Right cardiac atrium (tissue), 5 donors: ENCODE measurements at regions of chr18 and their contacts with region 1.

Region 1: DNA sequence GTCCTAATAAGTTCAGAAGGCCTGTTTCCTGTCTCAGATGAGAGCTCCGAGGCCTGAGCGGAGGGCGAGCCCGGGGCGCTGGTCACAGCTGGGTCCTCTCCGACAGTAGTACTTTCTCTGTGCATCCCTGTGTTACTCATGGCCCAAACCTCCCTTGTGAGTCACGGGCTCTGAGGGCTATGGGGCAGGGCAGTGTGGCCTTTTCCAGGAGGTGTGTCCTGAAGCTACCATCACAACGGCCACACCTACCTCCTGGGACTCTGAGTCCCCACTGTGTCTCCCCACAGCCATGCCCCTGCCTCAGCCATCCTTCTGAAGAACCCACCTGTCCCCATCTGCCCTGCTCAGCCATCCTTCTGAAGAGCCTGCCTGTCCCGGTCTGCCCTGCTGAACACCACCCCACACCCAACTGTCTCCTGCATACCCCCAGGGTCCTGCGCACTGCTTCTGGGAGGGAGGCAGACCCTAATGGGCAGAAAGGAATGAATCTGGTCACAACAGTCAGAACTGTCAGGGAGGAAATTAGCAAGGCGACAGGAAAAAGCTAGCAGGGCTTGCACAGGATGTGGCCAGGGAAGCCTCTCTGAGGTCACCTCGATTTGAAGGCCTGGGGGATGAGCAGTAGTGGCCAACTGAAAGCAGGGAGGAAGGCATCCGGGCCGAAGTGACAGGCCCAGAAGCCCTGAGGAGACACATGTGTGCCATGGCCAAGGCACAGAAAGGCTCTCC is 145.4 kb upstream of the RIOK3 start:
- DNase-seq: no peak
- ATAC-seq: peak in 1 of 2 donors; percentile 7
- H3K4me3 ChIP-seq: no peak overlapping the region
- H3K27ac ChIP-seq: no peak overlapping the region
- H3K4me1 ChIP-seq: peaks cover 3% of the 10 kb centered on the region
- H3K27me3 ChIP-seq: no peaks in the 10 kb centered on the region

Region 2: DNA sequence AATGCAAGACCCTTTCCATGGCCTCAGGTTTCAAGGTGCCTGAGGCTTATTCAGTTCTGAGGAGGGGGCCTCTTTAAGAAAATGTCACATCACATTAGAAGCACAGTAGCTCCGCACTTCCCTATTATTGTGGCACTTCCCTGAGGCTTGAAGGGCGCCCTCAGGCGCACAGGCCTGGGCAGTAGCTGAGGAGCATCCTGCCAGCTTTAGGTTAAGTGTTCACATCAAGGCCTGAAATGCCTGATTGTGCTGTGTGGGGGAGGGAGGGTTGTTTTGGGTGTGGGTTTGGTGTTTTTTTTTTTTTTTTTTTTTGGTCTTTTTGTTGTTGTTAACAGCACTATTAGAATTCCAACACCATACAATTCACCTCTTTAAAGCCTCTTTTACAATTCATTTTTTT is 64.6 kb before region 1 on chr18:
- intact Hi-C with region 1: loop called in 1 of 4 experiments (anchors 10 kb)
- DNase-seq: no peak
- ATAC-seq: no peak
- H3K4me3 ChIP-seq: no peak overlapping the region
- H3K27ac ChIP-seq: no peak overlapping the region
- H3K4me1 ChIP-seq: peaks cover 7% of the 10 kb centered on the region
- H3K27me3 ChIP-seq: no peaks in the 10 kb centered on the region